ENCODE measurements at regions of chr10 and their contacts with region 1.

Region 1: DNA sequence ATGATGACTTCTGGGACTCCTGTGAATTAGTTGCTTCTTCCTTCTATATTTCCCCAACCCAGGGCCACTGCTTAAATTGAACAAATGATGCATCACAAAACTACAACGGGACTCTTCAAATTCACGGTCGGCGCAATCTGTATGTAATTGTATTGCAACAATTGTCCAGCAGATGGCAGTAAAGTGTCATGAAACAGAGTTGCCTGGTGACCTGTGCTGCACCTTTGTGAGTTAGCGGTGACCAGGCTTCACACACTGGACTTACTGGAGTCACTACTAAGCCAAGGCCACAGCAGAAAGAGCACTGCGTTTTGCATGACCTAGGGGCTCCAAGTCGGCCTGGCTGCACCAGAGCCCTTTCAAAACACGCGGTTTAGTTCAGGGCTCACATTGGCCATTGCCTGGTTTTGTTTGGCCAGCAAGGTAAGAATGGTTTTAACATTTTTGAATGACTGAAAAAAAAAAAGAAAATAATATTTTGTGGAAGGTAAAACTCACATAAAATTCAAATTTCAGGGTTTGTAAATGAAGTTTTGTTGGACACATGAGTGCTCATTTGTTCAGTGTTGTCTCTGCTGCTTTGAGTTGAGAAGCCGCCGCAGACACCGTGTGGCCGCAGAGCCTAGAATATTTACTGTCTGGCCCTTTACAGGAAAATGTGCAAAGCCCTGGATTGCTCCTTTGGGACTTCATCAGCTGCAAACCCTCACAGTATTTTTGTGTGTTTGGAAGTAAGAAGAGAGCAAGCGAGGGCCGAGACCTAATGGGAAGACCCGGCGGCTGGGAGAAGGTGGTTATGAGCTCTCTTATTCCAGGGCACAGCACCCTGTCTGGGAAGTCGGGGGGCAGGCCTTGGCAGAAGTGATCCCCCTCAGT is 23.2 kb upstream of the ZNF32 start:
- DNase-seq: peak; percentile 53
- ATAC-seq: peak; percentile 75
- H3K4me3 Mint-ChIP-seq: no peak overlapping the region
- H3K27ac Mint-ChIP-seq: no peak overlapping the region
- H3K4me1 Mint-ChIP-seq: peaks cover 5% of the 10 kb centered on the region
- H3K27me3 Mint-ChIP-seq: peaks cover 33% of the 10 kb centered on the region

Region 2: DNA sequence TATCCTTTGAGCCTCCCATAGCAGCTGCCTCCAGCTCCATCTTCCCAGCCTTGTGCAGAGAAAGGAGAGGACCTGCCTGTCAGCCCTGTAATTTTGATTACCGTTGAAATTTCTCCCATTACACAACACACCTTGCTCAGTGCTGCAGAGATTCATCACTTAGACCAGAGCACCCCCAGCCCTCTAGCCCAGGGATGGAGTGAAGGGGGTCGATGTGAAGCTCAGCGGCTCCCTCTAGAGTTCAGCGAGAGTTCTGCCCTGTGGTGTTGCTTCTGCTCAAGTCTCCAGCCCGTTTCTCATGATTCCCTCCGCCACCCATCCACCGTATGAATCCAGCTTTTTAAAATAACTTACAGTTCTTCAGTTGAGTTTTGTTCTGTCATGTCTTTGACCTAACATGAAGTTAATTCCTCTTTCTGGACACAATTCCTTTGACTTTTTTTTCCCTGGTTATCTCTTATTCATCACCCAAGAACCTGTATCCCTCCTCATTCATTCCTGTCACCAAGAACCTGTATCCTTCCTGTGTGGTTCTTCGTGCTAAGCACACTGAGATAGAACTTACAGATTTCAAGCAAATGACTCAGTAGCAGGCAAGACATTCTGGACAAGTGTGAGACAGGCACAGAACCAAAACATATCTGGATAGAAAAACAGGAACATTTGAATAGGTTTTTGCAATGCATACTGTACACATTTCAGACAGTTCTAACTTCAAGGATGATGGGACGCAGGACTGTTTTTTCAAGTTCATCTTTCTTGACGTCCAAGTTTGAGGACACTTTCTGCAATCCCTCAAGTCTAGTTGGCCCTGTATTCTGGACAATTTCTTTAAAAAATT is 11.8 kb after region 1 on chr10:
- CTCF ChIA-PET with region 1: interaction called, 17 read pairs
- POLR2A ChIA-PET with region 1: no interaction called
- intact Hi-C with region 1: no loop called
- DNase-seq: peak; percentile 57
- ATAC-seq: peak; percentile 80
- H3K4me3 Mint-ChIP-seq: no peak overlapping the region
- H3K27ac Mint-ChIP-seq: no peak overlapping the region
- H3K4me1 Mint-ChIP-seq: peaks cover 2% of the 10 kb centered on the region
- H3K27me3 Mint-ChIP-seq: peaks cover 29% of the 10 kb centered on the region

Region 3: GRCh38 chr10:44030143-44030542 is 358.2 kb after region 1 on chr10:
- CTCF ChIA-PET with region 1: interaction called, 3 read pairs
- POLR2A ChIA-PET with region 1: no interaction called
- intact Hi-C with region 1: loop called in 1 of 2 experiments (anchors 5 kb)
- DNase-seq: peak; percentile 58
- ATAC-seq: peak; percentile 76
- H3K4me3 Mint-ChIP-seq: no peak overlapping the region
- H3K27ac Mint-ChIP-seq: no peak overlapping the region
- H3K4me1 Mint-ChIP-seq: peaks cover 2% of the 10 kb centered on the region
- H3K27me3 Mint-ChIP-seq: no peaks in the 10 kb centered on the region

Region 4: GRCh38 chr10:44310762-44311562 is 639.1 kb after region 1 on chr10:
- CTCF ChIA-PET with region 1: interaction called, 3 read pairs
- POLR2A ChIA-PET with region 1: no interaction called
- intact Hi-C with region 1: loop called (anchors 1 to 10 kb)
- DNase-seq: peak; percentile 85
- ATAC-seq: peak; percentile 98
- H3K4me3 Mint-ChIP-seq: no peak overlapping the region
- H3K27ac Mint-ChIP-seq: no peak overlapping the region
- H3K4me1 Mint-ChIP-seq: peaks cover 5% of the 10 kb centered on the region
- H3K27me3 Mint-ChIP-seq: peaks cover 18% of the 10 kb centered on the region

Region 5: GRCh38 chr10:44857363-44858016 is 1185.6 kb after region 1 on chr10:
- CTCF ChIA-PET with region 1: interaction called, 3 read pairs
- POLR2A ChIA-PET with region 1: no interaction called
- intact Hi-C with region 1: loop called in 1 of 2 experiments (anchors 2 kb)
- DNase-seq: peak; percentile 78
- ATAC-seq: peak; percentile 93
- H3K4me3 Mint-ChIP-seq: no peak overlapping the region
- H3K27ac Mint-ChIP-seq: no peak overlapping the region
- H3K4me1 Mint-ChIP-seq: no peaks in the 10 kb centered on the region
- H3K27me3 Mint-ChIP-seq: peaks cover 5% of the 10 kb centered on the region

Measured in activated CD4-positive, alpha-beta T cell treated with anti-CD3 and anti-CD28 coated beads for 36 hours (primary cell).